PC-9 (cell line): ENCODE measurements at regions of chr14 and their contacts with region 1.

Region 1: DNA sequence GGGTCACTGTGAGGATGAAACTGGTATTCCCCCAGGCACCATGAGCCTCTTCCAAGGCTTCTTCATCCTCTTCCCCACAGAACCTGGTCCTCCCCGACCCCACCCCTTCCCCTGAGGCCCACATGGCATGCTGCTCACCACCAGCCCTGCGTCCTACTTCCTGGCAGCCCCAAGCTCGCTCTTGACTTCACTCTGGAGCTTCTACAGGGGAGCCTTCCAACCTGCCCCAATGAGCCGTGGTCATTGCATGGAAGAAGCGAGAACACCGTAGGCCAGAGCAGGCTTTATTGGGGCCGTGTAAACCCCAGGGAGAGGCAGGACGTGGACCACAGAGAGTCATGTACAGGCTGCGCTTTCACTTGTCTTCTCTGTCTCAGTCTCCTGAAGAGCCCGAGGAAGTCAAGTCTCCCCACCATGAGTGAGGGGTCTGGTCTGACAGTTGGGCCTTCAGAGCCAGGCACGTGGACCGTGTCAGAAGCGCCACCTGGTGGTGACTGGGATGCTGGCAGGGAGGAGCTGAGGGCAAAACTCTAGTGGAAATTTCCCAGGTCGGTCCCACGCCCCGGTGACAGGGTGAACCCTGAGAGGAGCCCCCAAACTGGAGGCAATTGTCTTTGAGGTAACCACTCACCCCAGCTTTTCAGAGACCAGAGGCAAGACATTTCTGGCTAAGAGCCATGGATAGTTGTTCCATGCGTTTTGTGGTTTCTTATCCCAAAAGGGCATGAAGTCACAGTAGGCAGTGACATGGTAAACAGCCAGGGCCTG is 17.5 kb downstream of the RPS6KL1 start:
- DNase-seq: peak in 1 of 2 experiments; percentile 78
- H3K4me3 ChIP-seq: no peak overlapping the region
- H3K27ac ChIP-seq: no peak overlapping the region
- H3K4me1 ChIP-seq: no peaks in the 10 kb centered on the region
- H3K27me3 ChIP-seq: no peaks in the 10 kb centered on the region
- CTCF ChIP-seq: peak; percentile 100

Region 2: GRCh38 chr14:74275241-74275841 is 630.2 kb before region 1 on chr14:
- CTCF ChIA-PET with region 1: interaction called, 10 read pairs
- POLR2A ChIA-PET with region 1: no interaction called
- intact Hi-C with region 1: no loop called
- DNase-seq: peak; percentile 91 to 99
- H3K4me3 ChIP-seq: no peak overlapping the region
- H3K27ac ChIP-seq: peak overlapping the region; percentile 77
- H3K4me1 ChIP-seq: peaks cover 23% of the 10 kb centered on the region
- H3K27me3 ChIP-seq: no peaks in the 10 kb centered on the region
- CTCF ChIP-seq: no peak

Region 3: DNA sequence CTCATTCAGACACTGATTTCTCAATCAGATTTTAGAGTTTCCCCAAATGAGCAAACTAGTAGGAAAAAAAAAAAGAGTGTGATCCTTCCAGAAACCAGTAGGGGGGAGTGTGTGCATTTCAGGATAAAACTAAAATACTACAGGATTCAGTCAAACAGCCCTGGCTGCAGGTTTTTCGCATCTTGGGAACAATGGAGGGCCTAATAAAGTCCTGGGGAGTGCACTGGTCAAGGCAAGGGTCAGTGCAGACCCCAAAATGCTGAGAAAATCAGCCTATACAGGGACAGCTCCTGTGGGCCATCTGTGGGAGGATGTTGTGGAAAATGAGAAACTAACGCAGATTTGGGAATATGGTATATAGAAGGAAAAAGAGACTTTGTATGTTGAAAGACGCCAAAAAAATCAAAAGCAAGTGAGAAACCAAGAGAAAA is 580.6 kb before region 1 on chr14:
- CTCF ChIA-PET with region 1: no interaction called
- POLR2A ChIA-PET with region 1: no interaction called
- intact Hi-C with region 1: loop called (anchors 5 kb)
- DNase-seq: peak in 1 of 2 experiments; percentile 39
- H3K4me3 ChIP-seq: no peak overlapping the region
- H3K27ac ChIP-seq: no peak overlapping the region
- H3K4me1 ChIP-seq: no peaks in the 10 kb centered on the region
- H3K27me3 ChIP-seq: no peaks in the 10 kb centered on the region
- CTCF ChIP-seq: peak; percentile 95

Region 4: GRCh38 chr14:74362361-74362915 is 543.1 kb before region 1 on chr14:
- CTCF ChIA-PET with region 1: no interaction called
- POLR2A ChIA-PET with region 1: no interaction called
- intact Hi-C with region 1: loop called (anchors 5 kb)
- DNase-seq: peak; percentile 72 to 92
- H3K4me3 ChIP-seq: no peak overlapping the region
- H3K27ac ChIP-seq: no peak overlapping the region
- H3K4me1 ChIP-seq: no peaks in the 10 kb centered on the region
- H3K27me3 ChIP-seq: no peaks in the 10 kb centered on the region
- CTCF ChIP-seq: peak; percentile 100

Region 5: DNA sequence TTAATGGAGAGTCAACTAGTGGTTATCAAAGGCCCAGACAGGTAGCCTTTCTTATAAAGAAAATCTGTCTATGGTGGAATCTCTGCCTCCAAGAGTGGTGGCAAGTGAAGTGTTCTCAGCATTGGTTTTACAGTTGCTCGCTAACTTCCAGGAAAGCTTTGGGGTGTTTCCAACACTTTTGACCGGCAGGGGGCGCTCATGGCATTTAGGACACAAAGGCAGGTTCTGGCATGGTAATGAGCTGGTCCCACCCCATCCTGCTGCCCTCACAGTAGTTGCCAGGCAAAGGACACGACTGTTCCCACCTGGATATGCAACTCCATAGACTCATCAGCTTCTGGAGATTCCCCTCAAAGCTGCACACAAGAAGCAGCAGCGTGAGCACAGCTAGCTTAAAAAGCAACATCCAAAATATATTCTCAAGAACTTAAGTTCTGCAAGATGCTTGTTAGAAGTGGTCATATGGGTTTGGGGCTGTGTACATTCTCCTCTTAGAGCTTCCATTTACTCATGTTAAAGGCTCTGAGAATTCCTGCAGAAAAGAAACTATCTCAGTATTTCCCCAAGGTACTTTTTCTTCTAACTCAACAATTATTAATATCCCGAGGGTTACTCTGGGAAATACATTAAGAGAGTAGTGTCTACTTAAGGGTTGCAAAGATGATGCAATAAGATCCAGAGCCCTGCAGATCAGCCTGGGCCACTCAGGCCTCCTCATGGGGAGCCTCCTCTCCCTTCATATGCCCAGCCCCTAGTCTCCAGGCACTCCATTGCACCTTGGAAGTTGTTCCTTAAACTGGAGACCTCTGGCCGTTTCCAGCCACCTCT is 44.4 kb before region 1 on chr14:
- CTCF ChIA-PET with region 1: interaction called, 128 read pairs
- POLR2A ChIA-PET with region 1: no interaction called
- intact Hi-C with region 1: loop called (anchors 1 kb)
- DNase-seq: peak; percentile 73 to 96
- H3K4me3 ChIP-seq: no peak overlapping the region
- H3K27ac ChIP-seq: no peak overlapping the region
- H3K4me1 ChIP-seq: peaks cover 5% of the 10 kb centered on the region; the same call in 1 of the 2 replicates
- H3K27me3 ChIP-seq: no peaks in the 10 kb centered on the region
- CTCF ChIP-seq: peak; percentile 99

Region 6: GRCh38 chr14:74922739-74923401 is 17.3 kb after region 1 on chr14 and contains the start of gene RPS6KL1:
- CTCF ChIA-PET with region 1: interaction called, 7 read pairs
- POLR2A ChIA-PET with region 1: interaction called, 14 read pairs
- intact Hi-C with region 1: no loop called
- DNase-seq: peak; percentile 66 to 87
- H3K4me3 ChIP-seq: peak within 1 kb of the TSS; percentile 76
- H3K27ac ChIP-seq: no peak within 1 kb of the TSS
- H3K4me1 ChIP-seq: peaks cover 4% of the 10 kb centered on the region
- H3K27me3 ChIP-seq: 0 out of 2 replicates have a peak, but pooled peaks cover 4% of the 10 kb centered on the region
- CTCF ChIP-seq: no peak
- total RNA-seq, gene RPS6KL1: 3.4 and 4.2 TPM in 2 replicates